WTC11 (cell line): ENCODE measurements at regions of chrX and their contacts with region 1.

Region 1: GRCh38 chrX:129726307-129727111 is 12.3 kb upstream of the XPNPEP2 start:
- DNase-seq: peak; percentile 79
- ATAC-seq: peak; percentile 81
- H3K4me3 Mint-ChIP-seq: no peak overlapping the region
- H3K27ac Mint-ChIP-seq: no peak overlapping the region
- H3K4me1 Mint-ChIP-seq: peaks cover 38% of the 10 kb centered on the region
- H3K27me3 Mint-ChIP-seq: no peaks in the 10 kb centered on the region; the same call in none of the 2 replicates
- CTCF ChIP-seq: peak; percentile 56

Region 2: GRCh38 chrX:129433461-129433860 is 293.0 kb before region 1 on chrX:
- CTCF ChIA-PET with region 1: no interaction called
- POLR2A ChIA-PET with region 1: no interaction called
- DNase-seq: no peak
- ATAC-seq: no peak
- H3K4me3 Mint-ChIP-seq: no peak overlapping the region
- H3K27ac Mint-ChIP-seq: no peak overlapping the region
- H3K4me1 Mint-ChIP-seq: no peaks in the 10 kb centered on the region
- H3K27me3 Mint-ChIP-seq: no peaks in the 10 kb centered on the region
- CTCF ChIP-seq: no peak

Region 3: DNA sequence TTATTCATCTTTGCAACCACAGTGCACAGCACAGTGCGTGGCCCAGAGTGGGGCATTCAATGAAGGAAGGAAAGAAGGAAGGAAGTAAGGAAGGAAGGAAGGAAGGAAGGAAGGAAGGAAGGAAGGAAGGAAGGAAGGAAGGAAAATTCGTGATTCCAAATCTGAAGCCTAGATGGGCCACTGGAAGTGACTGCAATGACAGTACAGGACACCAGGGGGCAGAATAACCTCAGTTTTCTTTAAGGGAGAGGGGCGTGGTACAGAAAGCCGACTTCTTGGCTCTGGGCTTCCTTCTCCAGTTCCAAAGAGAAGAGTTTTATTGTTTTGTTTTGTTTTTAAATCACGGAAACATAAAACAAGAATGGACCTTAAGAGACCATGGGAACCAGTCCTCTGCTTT is 119.6 kb before region 1 on chrX:
- CTCF ChIA-PET with region 1: interaction called, 33 read pairs
- POLR2A ChIA-PET with region 1: no interaction called
- DNase-seq: peak; percentile 49
- ATAC-seq: no peak
- H3K4me3 Mint-ChIP-seq: no peak overlapping the region
- H3K27ac Mint-ChIP-seq: no peak overlapping the region
- H3K4me1 Mint-ChIP-seq: peaks cover 15% of the 10 kb centered on the region; the same call in 1 of the 2 replicates
- H3K27me3 Mint-ChIP-seq: 0 out of 2 replicates have a peak, but pooled peaks cover 5% of the 10 kb centered on the region
- CTCF ChIP-seq: peak; percentile 47

Region 4: GRCh38 chrX:129637217-129638109 is 89.0 kb before region 1 on chrX:
- CTCF ChIA-PET with region 1: interaction called, 76 read pairs
- POLR2A ChIA-PET with region 1: no interaction called
- DNase-seq: peak; percentile 78
- ATAC-seq: peak; percentile 57
- H3K4me3 Mint-ChIP-seq: no peak overlapping the region
- H3K27ac Mint-ChIP-seq: no peak overlapping the region
- H3K4me1 Mint-ChIP-seq: peaks cover 12% of the 10 kb centered on the region
- H3K27me3 Mint-ChIP-seq: no peaks in the 10 kb centered on the region
- CTCF ChIP-seq: peak; percentile 87

Region 5: DNA sequence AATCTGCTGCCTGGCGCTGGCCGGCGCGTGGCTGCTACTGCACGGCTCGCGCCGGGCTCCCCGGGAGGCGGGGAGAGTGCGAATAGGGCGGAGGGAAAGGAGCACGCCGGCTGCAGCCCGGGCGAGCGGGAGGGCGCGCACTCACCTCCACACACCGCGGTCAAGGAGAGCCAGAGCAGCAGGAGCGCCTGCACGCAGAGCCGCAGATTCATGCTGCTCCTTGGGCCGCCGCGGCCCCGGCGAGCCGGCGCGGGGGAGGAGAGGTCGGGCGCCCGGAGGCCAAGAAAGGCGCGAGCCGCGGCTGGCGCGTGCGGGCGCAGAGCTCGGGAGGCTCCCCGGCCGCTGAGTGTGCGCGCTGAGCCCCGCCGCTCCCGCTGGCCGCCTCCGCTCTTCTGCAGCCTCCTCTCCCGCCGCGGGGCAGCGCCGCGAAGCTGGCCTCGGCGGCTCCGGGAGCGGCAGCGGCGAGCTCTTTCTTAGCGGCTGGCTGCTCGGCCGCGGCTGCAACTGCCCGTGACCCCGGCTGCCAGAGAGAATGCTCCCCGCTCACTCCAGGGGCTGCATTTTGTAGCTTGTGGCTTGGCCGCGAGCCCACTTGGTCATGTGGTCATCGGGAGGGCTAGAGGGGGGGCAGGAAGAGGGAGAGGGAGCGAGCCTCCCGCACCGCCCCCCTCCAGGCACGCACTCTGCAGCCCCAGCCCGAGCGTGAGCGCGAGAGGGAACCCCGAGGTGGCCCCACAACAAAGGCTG is 71.9 kb before region 1 on chrX and contains the start of gene APLN:
- CTCF ChIA-PET with region 1: interaction called, 30 read pairs
- POLR2A ChIA-PET with region 1: no interaction called
- DNase-seq: peak; percentile 28
- ATAC-seq: peak; percentile 49
- H3K4me3 Mint-ChIP-seq: peak within 1 kb of the TSS; percentile 64
- H3K27ac Mint-ChIP-seq: no peak within 1 kb of the TSS
- H3K4me1 Mint-ChIP-seq: peaks cover 26% of the 10 kb centered on the region
- H3K27me3 Mint-ChIP-seq: peaks cover 61% of the 10 kb centered on the region
- CTCF ChIP-seq: no peak
- total RNA-seq, gene APLN: 2.5 to 4.2 TPM (median 2.6 TPM) in 3 replicates

Region 6: GRCh38 chrX:129678614-129679195 is 47.8 kb before region 1 on chrX:
- CTCF ChIA-PET with region 1: interaction called, 15 read pairs
- POLR2A ChIA-PET with region 1: no interaction called
- DNase-seq: no peak
- ATAC-seq: no peak
- H3K4me3 Mint-ChIP-seq: peak overlapping the region; percentile 43
- H3K27ac Mint-ChIP-seq: no peak overlapping the region
- H3K4me1 Mint-ChIP-seq: peaks cover 14% of the 10 kb centered on the region
- H3K27me3 Mint-ChIP-seq: peaks cover 22% of the 10 kb centered on the region
- CTCF ChIP-seq: no peak

Region 7: GRCh38 chrX:129737916-129738315 is 11.4 kb after region 1 on chrX:
- CTCF ChIA-PET with region 1: interaction called, 10 read pairs
- POLR2A ChIA-PET with region 1: no interaction called
- DNase-seq: no peak
- ATAC-seq: no peak
- H3K4me3 Mint-ChIP-seq: no peak overlapping the region
- H3K27ac Mint-ChIP-seq: no peak overlapping the region
- H3K4me1 Mint-ChIP-seq: peaks cover 27% of the 10 kb centered on the region
- H3K27me3 Mint-ChIP-seq: peaks cover 10% of the 10 kb centered on the region
- CTCF ChIP-seq: no peak

Region 8: DNA sequence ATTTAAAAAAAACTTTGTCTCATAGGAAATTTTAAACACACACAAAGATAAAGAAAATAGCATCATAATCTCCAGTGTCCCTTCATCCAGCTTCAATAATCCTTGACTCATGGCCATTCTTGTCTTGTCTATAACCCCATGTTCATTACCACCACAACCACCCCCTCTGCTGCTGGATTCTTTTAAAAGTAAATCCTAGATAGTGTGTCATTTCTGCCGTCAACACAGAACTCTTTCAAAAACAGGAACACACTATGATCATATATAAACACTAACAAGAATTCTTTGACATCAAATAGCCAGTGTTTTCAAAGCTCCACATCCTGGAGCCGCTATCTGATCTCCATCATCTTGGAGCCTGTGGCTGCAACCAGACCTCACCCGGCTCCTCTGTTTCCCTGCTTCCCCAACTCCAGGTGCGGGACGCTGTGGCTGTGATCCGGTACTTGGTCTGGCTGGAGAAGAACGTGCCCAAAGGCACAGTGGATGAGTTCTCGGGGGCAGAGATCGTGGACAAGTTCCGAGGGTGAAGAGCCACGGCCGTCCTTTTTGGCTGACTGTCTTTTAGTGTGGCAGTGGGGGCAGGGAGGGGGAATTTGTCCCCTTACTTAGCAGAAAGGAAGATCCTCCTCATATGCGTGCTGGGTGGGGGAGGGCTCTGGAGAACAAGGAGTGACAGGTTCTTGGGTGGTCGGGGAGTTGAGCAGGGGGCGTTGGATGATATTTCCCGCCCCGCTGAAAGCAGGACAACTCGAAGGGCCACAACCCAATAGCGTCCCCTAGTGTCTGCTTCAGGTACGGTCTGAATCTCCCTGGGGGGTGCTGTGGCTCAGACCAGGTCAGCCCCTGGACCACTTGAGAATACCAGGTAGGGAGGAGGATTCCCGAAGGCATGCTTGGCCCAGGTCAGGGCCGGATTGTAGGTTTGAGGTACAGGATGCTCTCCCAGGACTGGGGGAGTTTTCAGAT is 27.8 kb after region 1 on chrX:
- CTCF ChIA-PET with region 1: interaction called, 21 read pairs
- POLR2A ChIA-PET with region 1: no interaction called
- DNase-seq: peak; percentile 72
- ATAC-seq: peak; percentile 60
- H3K4me3 Mint-ChIP-seq: no peak overlapping the region
- H3K27ac Mint-ChIP-seq: no peak overlapping the region
- H3K4me1 Mint-ChIP-seq: peaks cover 21% of the 10 kb centered on the region
- H3K27me3 Mint-ChIP-seq: no peaks in the 10 kb centered on the region; the same call in 1 of the 2 replicates
- CTCF ChIP-seq: peak; percentile 72